Endothelial cell of umbilical vein (primary cell): ENCODE measurements at regions of chr3 and their contacts with region 1.

Region 1: GRCh38 chr3:110314512-110315114 is 757.0 kb upstream of the NECTIN3 start:
- DNase-seq: peak; percentile 56
- H3K4me3 ChIP-seq: no peak overlapping the region
- H3K27ac ChIP-seq: no peak overlapping the region
- H3K4me1 ChIP-seq: peaks cover 12% of the 10 kb centered on the region
- H3K27me3 ChIP-seq: no peaks in the 10 kb centered on the region
- CTCF ChIP-seq: peak; percentile 67 to 80
- POLR2A ChIP-seq: no peak

Region 2: GRCh38 chr3:109963831-109964230 is 350.8 kb before region 1 on chr3:
- CTCF ChIA-PET with region 1: no interaction called
- POLR2A ChIA-PET with region 1: no interaction called
- dilution Hi-C with region 1: no loop called
- intact Hi-C with region 1: no loop called
- DNase-seq: no peak
- H3K4me3 ChIP-seq: no peak overlapping the region
- H3K27ac ChIP-seq: no peak overlapping the region
- H3K4me1 ChIP-seq: no peaks in the 10 kb centered on the region
- H3K27me3 ChIP-seq: no peaks in the 10 kb centered on the region
- CTCF ChIP-seq: no peak
- POLR2A ChIP-seq: no peak

Region 3: GRCh38 chr3:110126065-110126464 is 188.5 kb before region 1 on chr3:
- CTCF ChIA-PET with region 1: no interaction called
- POLR2A ChIA-PET with region 1: no interaction called
- dilution Hi-C with region 1: no loop called
- intact Hi-C with region 1: no loop called
- DNase-seq: no peak
- H3K4me3 ChIP-seq: no peak overlapping the region
- H3K27ac ChIP-seq: no peak overlapping the region
- H3K4me1 ChIP-seq: no peaks in the 10 kb centered on the region
- H3K27me3 ChIP-seq: no peaks in the 10 kb centered on the region
- CTCF ChIP-seq: no peak
- POLR2A ChIP-seq: no peak

Region 4: DNA sequence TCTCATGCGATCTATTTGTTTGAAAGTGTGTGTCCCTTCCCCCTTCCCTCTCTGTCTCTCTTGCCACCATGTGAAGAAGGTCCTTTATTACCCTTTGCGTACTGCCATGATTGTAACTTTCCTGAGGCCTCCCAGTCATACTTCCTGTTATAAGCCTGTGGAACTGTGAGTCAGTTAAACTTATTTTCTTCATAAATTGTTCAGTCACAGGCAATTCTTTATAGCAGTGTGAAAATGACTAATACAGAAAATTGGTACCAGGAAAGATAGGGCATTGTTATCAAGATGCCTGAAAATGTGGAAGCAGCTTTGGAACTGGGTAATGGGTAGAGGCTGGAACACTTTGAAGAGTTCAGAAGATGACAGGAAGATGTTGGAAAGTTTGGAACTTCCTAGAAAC is 13.3 kb after region 1 on chr3:
- CTCF ChIA-PET with region 1: interaction called, 28 read pairs
- POLR2A ChIA-PET with region 1: no interaction called
- dilution Hi-C with region 1: no loop called
- intact Hi-C with region 1: no loop called
- DNase-seq: peak; percentile 44
- H3K4me3 ChIP-seq: no peak overlapping the region
- H3K27ac ChIP-seq: peak overlapping the region; percentile 32
- H3K4me1 ChIP-seq: peaks cover 2% of the 10 kb centered on the region
- H3K27me3 ChIP-seq: no peaks in the 10 kb centered on the region
- CTCF ChIP-seq: no peak
- POLR2A ChIP-seq: no peak

Region 5: DNA sequence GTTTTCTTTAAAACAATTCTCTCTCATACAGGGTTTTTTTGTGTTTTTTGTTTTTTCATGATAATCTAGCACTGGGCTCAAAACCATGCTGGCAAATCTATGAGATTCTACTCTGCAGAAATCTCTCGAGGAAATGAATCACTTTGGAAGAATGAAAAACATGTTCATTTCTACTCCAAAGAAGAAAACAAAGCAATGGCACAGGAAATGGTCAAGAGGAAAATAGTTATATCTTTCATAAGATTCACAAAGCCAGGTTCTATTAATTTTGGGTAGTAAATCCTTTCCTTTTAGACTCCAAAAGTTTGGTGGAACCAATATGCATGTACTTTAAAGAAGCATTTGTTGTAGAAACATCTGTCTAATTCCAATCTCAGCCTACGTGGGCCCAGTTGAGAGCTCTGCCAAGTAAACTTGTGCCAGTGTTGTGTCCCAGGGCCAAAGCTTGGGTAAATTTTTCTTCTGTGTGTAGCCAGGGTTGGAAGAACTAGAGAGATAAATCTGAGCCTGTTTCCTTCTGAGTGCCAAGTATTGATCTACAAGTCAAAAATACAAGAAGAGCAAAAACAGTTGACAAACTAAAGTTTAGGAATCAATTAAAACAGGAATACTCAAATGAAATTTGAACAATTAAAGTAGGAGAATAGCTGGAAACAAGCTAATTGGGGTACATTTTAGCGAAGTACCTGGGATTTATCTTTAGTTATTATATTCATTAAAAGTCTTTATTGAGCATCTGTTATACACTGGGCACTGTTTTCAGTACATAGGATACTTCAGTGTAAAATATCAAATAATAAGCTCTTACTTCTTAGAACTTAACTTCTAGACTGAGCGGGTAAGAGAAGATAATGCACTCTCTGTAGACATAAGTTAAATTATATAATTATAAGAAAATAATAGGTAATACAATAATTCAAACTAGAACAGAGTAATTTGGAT is 99.5 kb after region 1 on chr3:
- CTCF ChIA-PET with region 1: interaction called, 7 read pairs
- POLR2A ChIA-PET with region 1: no interaction called
- dilution Hi-C with region 1: no loop called
- intact Hi-C with region 1: loop called (anchors 2 kb)
- DNase-seq: peak; percentile 92
- H3K4me3 ChIP-seq: no peak overlapping the region
- H3K27ac ChIP-seq: peak overlapping the region; percentile 99
- H3K4me1 ChIP-seq: peaks cover 39% of the 10 kb centered on the region
- H3K27me3 ChIP-seq: no peaks in the 10 kb centered on the region
- CTCF ChIP-seq: no peak
- POLR2A ChIP-seq: no peak

Region 6: DNA sequence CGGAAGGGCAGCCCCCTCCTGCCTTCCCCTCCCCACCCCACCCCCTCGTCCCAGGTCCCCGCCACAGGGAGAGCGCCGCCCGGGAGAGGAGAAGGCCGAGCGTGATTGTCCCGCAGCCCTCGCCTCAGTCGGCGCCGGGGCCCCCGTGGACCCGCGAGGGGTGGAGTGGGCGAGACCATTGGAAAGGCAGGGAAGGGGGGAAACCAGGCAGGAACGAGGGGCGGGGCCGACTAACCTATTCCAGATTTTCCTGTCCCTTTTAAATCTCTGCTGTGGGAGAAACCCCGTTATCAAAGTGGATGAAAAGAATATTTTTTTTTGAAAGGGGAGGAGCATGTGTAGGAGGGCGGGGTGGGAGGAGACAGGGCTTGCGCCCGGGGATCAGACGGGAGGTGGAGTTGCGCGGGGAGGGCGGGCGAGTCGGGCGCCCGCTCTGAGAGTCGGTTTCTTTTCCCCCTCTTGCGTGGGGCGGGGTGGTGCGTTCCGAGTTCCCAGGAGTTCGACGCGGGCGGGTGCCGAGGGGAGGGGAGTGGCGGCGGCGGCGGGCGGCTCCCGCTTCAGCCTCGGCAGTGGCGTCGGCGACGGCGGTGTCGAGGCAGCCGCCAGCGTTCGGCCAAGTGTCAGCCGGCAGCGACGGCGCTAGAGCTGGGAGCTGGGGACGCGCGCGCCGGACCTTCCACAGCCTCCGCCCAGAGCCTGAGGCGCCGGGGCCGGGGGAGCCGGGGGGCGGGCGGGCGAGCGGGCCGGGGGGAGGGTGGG is 756.8 kb after region 1 on chr3 and contains the start of gene NECTIN3:
- CTCF ChIA-PET with region 1: interaction called, 11 read pairs
- POLR2A ChIA-PET with region 1: no interaction called
- dilution Hi-C with region 1: no loop called
- intact Hi-C with region 1: no loop called
- DNase-seq: peak; percentile 98
- H3K4me3 ChIP-seq: peak within 1 kb of the TSS; percentile 91 to 96 (median 96)
- H3K27ac ChIP-seq: peak within 1 kb of the TSS; percentile 82
- H3K4me1 ChIP-seq: peaks cover 23% of the 10 kb centered on the region
- H3K27me3 ChIP-seq: no peaks in the 10 kb centered on the region
- CTCF ChIP-seq: no peak
- POLR2A ChIP-seq: peak; percentile 54
- total RNA-seq, gene NECTIN3: 26.9 and 32.6 TPM in 2 replicates